ENCODE measurements at regions of chr17 and their contacts with region 1.

Region 1: GRCh38 chr17:18377437-18378204 is at the start of gene EVPLL:
- DNase-seq: no peak
- H3K4me3 ChIP-seq: no peak within 1 kb of the TSS
- H3K27ac ChIP-seq: no peak within 1 kb of the TSS
- H3K27me3 ChIP-seq: peaks cover 18% of the 10 kb centered on the region
- CTCF ChIP-seq: peak; percentile 17; the same call in 1 of the 2 replicates
- polyA plus RNA-seq, gene EVPLL: not detected in 2 replicates

Region 2: GRCh38 chr17:18363101-18364049 is 14.2 kb before region 1 on chr17 and contains the start of gene SHMT1:
- CTCF ChIA-PET with region 1: no interaction called
- POLR2A ChIA-PET with region 1: interaction called, 10 read pairs
- DNase-seq: peak; percentile 41
- H3K4me3 ChIP-seq: peak within 1 kb of the TSS; percentile 77
- H3K27ac ChIP-seq: no peak within 1 kb of the TSS
- H3K27me3 ChIP-seq: no peaks in the 10 kb centered on the region
- CTCF ChIP-seq: no peak
- polyA plus RNA-seq, gene SHMT1: 4.0 and 4.3 TPM in 2 replicates

Region 3: GRCh38 chr17:19482576-19482975 is 1105.0 kb after region 1 on chr17:
- CTCF ChIA-PET with region 1: no interaction called
- POLR2A ChIA-PET with region 1: no interaction called
- DNase-seq: no peak
- H3K4me3 ChIP-seq: no peak overlapping the region
- H3K27ac ChIP-seq: no peak overlapping the region
- H3K27me3 ChIP-seq: peaks cover 3% of the 10 kb centered on the region
- CTCF ChIP-seq: no peak

Measured in AG04450 (cell line).